Posterior vena cava (tissue), 2 donors: ENCODE measurements at regions of chr11 and their contacts with region 1.

Region 1: DNA sequence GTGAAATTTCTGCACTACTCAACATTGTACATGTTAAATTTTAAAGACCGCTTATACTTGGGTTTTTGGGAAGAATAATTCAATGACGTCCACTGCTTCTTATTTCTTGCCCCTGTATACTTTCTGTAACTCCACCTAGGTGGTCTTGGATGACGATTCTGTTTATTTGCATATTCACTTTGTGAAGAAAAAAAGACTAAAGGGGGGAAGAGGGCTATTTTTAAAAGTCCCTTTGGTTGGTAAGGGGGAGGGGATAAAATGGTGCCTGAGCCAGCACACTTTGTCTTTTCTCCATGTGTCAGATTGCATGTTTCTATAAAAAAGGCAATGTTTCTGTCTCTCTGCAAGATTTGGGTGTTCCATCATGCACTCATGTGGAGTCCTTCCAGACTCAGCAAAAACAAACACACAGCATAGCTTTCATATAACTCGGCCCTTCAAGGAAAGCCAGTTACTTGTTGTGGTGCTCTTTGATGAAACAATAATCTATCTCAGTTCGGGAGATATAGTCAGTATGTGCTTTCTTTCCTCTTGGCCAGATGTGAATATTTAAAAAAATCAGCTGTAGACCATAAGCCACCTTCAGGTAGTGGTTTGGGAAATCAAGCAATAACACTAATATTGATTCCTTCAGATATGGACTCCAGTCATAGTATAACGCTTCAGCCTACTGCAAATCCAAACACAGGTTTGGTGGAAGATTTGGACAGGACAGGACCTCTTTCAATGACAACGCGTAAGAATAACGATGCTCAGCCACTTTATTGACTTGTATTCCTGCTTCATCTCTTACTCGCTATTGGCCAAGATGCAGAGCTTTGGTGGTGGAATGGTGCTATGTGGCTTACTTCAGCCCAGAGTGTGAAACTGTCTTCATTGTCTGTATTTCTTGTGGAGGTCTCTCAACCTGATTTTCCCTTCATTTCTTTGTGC is 68.8 kb downstream of the CD44 start:
- DNase-seq: no peak

Region 2: GRCh38 chr11:35006389-35007128 is 201.2 kb before region 1 on chr11:
- intact Hi-C with region 1: loop called in 1 of 2 experiments (anchors 10 kb)
- DNase-seq: no peak

Region 3: DNA sequence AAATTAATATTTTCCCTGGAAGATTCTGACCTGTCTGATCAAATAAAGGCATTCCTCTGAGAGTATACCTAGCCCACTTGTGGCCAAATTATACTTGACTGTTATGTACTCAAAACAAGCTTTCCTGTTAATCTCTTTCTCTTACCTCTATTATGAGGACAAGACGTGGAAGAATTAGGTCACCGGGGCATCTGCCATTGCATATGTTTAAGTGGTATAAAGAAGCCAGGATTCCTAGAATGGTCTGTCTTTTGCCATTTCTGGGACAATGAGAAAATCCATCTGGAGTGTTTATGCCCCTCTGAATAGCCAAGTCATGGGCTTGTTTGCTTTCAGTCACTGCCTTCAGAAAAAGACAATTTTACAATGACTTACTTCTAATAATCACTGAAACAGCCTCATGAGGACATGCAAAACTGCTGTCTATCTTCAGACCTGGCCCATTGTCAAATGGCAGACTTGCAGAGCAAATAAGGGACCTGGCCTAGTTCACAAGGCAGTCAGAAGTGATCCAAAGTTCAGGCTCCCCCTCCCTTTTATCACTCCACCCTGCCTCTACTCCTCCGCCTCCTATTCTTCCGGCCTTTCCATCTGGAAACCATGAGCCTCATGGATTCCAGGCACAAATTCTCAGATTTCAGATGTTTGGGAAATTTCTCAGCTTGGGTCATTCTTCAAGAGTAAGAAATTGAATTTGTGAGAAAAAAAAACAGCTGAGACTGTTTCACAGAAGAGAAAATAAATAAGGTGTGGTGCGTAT is 608.0 kb after region 1 on chr11:
- intact Hi-C with region 1: no loop called
- DNase-seq: no peak